ENCODE measurements at regions of chr1 and their contacts with region 1.

Region 1: GRCh38 chr1:51897699-51898031 is 19.1 kb upstream of the NRDC start:
- DNase-seq: peak; percentile 83
- H3K4me3 ChIP-seq: no peak overlapping the region
- H3K27ac ChIP-seq: peak overlapping the region; percentile 93
- H3K4me1 ChIP-seq: peaks cover 23% of the 10 kb centered on the region
- H3K27me3 ChIP-seq: no peaks in the 10 kb centered on the region
- CTCF ChIP-seq: no peak
- POLR2A ChIP-seq: no peak

Region 2: DNA sequence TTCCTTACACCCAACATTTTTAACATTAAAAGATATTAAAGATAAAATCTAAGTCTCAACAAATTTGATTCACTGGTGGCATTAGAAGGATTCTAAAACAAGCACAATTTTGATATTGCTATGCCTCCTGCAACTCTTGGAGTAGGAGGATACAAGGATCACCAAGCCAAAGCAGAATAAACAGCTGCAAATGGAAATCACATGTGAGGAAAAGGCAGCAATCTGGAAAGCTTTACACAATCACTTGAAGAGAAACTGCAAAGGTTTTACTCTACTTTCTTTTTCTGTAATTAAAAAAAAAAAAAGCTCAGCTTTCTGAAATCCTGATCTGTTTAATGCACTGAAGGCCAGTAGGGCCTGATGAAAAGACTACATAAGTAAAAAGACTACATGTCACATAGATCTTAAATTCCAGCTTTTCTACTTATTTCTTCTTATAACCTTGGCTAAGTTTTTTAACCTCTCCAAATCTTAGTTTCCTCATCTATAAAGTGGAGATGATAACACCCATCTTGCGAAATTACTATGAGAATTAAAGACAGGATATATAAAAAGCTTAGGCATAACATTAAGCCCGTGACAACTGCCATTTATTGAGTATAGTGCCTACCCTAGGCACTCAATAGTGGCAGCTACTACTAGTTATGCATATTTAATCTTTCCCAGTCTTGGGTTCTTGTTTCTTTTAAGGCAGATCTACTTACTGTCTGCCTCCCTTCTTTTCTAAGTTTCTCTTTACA is 452.1 kb before region 1 on chr1:
- CTCF ChIA-PET with region 1: no interaction called
- POLR2A ChIA-PET with region 1: no interaction called
- dilution Hi-C with region 1: no loop called
- intact Hi-C with region 1: no loop called
- DNase-seq: no peak
- H3K4me3 ChIP-seq: no peak overlapping the region
- H3K27ac ChIP-seq: no peak overlapping the region
- H3K4me1 ChIP-seq: no peaks in the 10 kb centered on the region
- H3K27me3 ChIP-seq: no peaks in the 10 kb centered on the region
- CTCF ChIP-seq: no peak
- POLR2A ChIP-seq: no peak

Region 3: DNA sequence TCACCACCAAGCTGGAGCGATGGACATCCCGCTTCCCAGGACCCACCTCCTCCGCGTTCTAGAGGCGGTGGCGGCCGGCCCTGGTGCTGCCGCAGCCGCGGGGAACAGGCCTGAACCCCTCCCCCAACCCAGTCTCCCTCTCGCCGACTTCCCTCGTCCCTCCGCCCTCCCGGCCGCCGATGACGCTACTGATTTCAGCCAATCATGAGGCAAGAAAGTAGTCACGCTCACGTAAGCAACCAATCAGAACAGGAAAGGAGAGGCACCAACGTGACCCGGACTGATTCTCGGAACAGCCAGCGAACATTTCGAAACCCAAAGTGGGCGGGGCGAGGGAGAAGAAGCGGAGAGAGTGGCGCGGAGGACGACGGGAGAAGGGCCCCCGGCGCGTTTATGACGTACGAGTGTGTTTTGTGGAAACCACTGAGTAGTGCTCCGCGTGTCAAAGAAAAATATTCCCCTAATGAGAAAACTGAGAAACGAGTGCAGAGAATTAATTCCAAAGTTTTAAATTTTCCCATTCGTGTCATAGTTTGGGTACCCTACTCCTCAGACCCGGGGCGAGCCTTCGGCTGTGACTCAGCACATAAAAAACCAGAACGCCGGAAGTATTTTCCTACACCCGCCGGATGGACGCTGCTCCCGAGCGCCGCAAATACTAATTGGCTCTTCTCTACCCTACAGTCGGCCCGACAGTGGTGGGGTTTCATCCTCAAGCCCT is 18.9 kb before region 1 on chr1 and contains the start of gene NRDC:
- CTCF ChIA-PET with region 1: interaction called, 14 read pairs
- POLR2A ChIA-PET with region 1: no interaction called
- dilution Hi-C with region 1: no loop called
- intact Hi-C with region 1: loop called (anchors 1 kb)
- DNase-seq: peak; percentile 100
- H3K4me3 ChIP-seq: peak within 1 kb of the TSS; percentile 89 to 94 (median 94)
- H3K27ac ChIP-seq: peak within 1 kb of the TSS; percentile 97
- H3K4me1 ChIP-seq: peaks cover 24% of the 10 kb centered on the region
- H3K27me3 ChIP-seq: no peaks in the 10 kb centered on the region
- CTCF ChIP-seq: no peak
- POLR2A ChIP-seq: peak; percentile 74
- total RNA-seq, gene NRDC: 125 and 146 TPM in 2 replicates

Region 4: DNA sequence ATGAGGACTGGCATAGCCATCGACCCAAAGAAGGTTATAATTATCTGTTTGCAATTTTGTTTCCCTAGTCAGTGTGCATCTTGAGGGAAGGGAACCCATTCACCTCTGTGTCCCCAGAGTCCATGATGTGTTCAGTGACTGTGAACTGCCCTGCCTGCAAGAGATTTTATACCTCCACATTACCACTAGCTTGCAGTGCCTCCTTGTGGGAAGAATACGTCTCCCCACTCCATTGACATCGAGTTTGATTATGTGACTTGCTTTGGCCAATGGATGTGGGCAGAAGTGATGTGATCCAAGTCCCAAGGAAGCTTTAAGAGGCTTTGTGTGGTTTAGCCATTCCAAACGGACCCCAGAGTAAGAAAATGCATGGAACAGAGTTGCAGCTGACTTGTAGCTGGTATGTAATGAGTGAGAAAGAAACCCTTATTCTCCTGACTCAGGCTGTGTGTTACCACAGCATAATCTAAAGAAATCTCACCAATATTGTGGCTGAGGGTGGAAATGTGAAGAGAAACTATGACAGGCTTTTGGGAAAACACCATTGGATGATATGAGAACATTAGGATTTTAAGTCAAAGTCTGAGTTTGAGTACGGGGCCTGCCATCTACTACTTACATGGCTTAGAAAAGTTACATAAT is 28.6 kb after region 1 on chr1:
- CTCF ChIA-PET with region 1: interaction called, 66 read pairs
- POLR2A ChIA-PET with region 1: no interaction called
- dilution Hi-C with region 1: no loop called
- intact Hi-C with region 1: loop called (anchors 1 kb)
- DNase-seq: peak; percentile 52
- H3K4me3 ChIP-seq: no peak overlapping the region
- H3K27ac ChIP-seq: no peak overlapping the region
- H3K4me1 ChIP-seq: no peaks in the 10 kb centered on the region
- H3K27me3 ChIP-seq: no peaks in the 10 kb centered on the region
- CTCF ChIP-seq: peak; percentile 37 to 53
- POLR2A ChIP-seq: no peak

Region 5: GRCh38 chr1:52002038-52002917 is 104.6 kb after region 1 on chr1:
- CTCF ChIA-PET with region 1: interaction called, 50 read pairs
- POLR2A ChIA-PET with region 1: no interaction called
- dilution Hi-C with region 1: no loop called
- intact Hi-C with region 1: loop called (anchors 1 kb)
- DNase-seq: peak; percentile 89
- H3K4me3 ChIP-seq: no peak overlapping the region
- H3K27ac ChIP-seq: no peak overlapping the region
- H3K4me1 ChIP-seq: no peaks in the 10 kb centered on the region
- H3K27me3 ChIP-seq: peaks cover under 1 to 3% of the 10 kb centered on the region in 2 experiments
- CTCF ChIP-seq: peak; percentile 82 to 91
- POLR2A ChIP-seq: no peak

Region 6: DNA sequence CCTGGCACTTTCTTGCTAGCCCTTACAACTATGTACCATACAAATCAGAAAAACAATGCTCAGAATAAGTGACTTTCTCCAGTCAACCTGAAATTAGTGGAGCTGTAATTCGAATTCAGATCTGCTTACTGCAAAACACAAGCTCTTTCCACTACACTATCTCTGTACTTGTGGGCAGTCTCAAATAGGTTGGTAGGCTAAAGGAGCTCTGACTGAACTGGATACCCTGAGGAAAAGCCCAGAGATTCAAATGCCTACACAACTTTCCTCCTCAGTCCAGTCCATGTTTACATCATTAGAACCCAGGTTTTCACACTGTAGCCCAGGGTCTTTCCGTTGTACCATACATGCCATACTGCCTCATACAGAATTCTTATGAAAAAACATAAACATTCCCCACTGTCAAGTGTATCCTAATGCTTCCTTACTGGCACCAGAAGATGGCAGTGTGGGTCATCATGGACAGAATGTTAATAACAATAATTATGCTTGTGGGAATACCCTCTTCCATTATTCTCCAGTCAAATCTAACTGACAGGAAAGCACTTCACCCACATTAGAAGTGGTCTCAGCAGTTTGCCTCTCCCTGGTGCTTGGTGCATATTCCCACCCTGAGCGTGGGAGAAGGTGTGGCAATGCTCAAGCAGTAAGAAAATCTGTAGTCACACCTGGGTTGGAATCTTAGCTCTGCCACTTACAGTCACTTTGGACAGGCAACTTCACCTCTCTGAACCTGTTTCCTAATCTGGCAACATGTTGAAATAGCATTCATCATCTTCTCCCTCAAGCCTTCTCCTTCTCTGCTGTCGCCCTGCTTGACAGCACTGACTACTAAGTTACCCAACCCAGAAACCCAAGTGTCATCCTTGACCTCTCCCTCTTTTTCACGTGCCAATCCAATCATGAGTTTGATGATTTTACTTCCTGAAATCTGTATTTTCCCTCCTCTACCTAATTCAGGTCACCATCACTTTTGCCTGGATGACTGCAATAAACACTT is 229.8 kb after region 1 on chr1:
- CTCF ChIA-PET with region 1: no interaction called
- POLR2A ChIA-PET with region 1: no interaction called
- dilution Hi-C with region 1: no loop called
- intact Hi-C with region 1: loop called (anchors 10 kb)
- DNase-seq: peak; percentile 85
- H3K4me3 ChIP-seq: no peak overlapping the region
- H3K27ac ChIP-seq: no peak overlapping the region
- H3K4me1 ChIP-seq: no peaks in the 10 kb centered on the region
- H3K27me3 ChIP-seq: no peaks in the 10 kb centered on the region
- CTCF ChIP-seq: peak; percentile 62 to 69
- POLR2A ChIP-seq: no peak

Region 7: DNA sequence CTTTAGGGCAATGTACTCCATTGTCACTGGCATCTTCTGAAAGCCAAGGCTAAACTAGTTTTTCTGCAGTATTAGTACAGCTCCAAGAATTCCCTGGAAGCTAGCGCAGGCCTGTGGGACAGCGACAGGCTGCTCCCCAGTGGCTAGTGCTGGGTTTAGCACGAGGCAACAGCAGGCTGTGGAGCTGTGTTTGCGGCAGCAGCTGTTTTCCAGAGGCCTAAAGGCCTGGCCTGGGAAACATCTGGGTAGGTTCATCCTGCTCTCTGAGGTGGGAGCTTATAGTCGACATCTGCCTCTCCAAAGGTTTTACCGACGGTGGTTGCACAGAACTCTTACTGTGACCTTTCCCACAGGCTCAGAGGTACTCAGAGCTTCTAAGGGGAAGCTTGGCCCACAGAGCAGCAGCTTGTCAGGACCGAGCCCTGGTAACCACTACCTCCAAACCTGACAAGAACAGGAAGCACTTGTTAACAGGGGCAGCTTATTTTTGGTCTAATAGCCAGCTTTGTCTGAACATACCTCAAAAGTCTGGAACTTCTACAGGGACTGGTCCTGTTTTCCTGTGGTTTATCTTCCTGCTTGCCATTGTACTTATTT is 451.1 kb after region 1 on chr1:
- CTCF ChIA-PET with region 1: interaction called, 6 read pairs
- POLR2A ChIA-PET with region 1: no interaction called
- dilution Hi-C with region 1: no loop called
- intact Hi-C with region 1: loop called (anchors 5 kb)
- DNase-seq: peak; percentile 24
- H3K4me3 ChIP-seq: no peak overlapping the region
- H3K27ac ChIP-seq: no peak overlapping the region
- H3K4me1 ChIP-seq: no peaks in the 10 kb centered on the region
- H3K27me3 ChIP-seq: no peaks in the 10 kb centered on the region
- CTCF ChIP-seq: peak; percentile 17 to 37
- POLR2A ChIP-seq: peak; percentile 60